Common myeloid progenitor, CD34-positive (primary cell): ENCODE measurements at regions of chr2 and their contacts with region 1.

Region 1: GRCh38 chr2:191846515-191847476 is at the start of gene CAVIN2:
- DNase-seq: peak; percentile 78 to 95 (median 93)
- H3K4me3 ChIP-seq: peak within 1 kb of the TSS; percentile 71 to 94 (median 84)
- H3K27ac ChIP-seq: peak within 1 kb of the TSS; percentile 59 to 82
- H3K4me1 ChIP-seq: peaks cover 15 to 69% (median 41%) of the 10 kb centered on the region in 4 experiments
- H3K27me3 ChIP-seq: no peaks in the 10 kb centered on the region

Region 2: DNA sequence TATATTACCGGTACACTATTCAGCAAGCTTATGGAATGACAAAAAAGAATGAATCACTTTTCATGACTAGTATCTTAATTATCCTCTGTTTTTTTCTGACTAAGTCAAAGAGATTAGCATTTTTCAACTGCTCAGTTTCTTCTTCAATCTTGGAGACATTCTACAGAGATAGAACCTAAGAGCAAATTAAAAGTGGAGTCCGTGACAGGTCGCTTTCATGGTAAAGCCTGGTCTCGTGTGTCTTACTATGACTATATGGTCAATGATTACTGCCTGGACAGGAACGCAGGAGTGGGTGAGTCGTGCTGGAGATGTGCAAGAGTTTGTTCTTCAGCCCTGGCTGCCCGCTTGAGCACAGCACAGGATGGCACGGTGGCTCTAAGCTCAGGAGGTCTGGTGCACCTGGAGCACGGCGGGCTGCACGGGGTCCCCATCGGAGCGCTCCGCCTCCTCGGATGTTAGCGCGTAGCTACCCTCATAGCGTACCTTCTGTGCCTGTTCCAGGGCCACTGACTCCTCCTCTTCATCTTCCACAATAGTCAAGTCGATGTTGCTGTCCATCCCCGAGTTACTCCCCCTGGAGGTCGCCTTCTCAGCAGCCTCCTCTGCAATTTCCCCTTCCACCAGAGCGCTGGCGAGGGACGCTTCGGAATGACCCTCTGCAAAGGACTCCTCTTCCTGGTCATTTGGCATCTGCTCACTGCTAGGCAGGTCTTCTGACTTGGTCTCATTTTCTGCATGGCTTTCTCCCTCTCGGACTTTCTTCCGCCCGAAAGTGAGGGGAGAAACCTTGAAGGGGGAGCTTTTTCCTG is 11.1 kb before region 1 on chr2:
- CTCF ChIA-PET with region 1: interaction called, 11 read pairs
- POLR2A ChIA-PET with region 1: interaction called, 3 read pairs
- DNase-seq: no peak
- H3K4me3 ChIP-seq: no peak overlapping the region
- H3K27ac ChIP-seq: peak overlapping the region in 1 of 2 experiments; percentile 86
- H3K4me1 ChIP-seq: peaks cover 13 to 58% (median 37%) of the 10 kb centered on the region in 4 experiments
- H3K27me3 ChIP-seq: no peaks in the 10 kb centered on the region